ENCODE measurements at regions of chr6 and their contacts with region 1.

Region 1: GRCh38 chr6:147806702-147807101 is 298.2 kb downstream of the SAMD5 start:
- DNase-seq: peak in 3 of 4 experiments; percentile 20 to 75 (median 22)
- ATAC-seq: peak; percentile 95
- H3K4me3 ChIP-seq: no peak overlapping the region
- H3K27ac ChIP-seq: no peak overlapping the region
- H3K4me1 ChIP-seq: peaks cover 0 to 3% of the 10 kb centered on the region in 2 experiments; a peak in 2 of 5 replicates
- H3K27me3 ChIP-seq: no peaks in the 10 kb centered on the region
- CTCF ChIP-seq: peak; percentile 50 to 59 (median 55); a peak in 5 of 6 replicates
- EP300 ChIP-seq: no peak
- POLR2A ChIP-seq: no peak
- RAD21 ChIP-seq: peak; percentile 6 to 47; a peak in 2 of 4 replicates

Region 2: DNA sequence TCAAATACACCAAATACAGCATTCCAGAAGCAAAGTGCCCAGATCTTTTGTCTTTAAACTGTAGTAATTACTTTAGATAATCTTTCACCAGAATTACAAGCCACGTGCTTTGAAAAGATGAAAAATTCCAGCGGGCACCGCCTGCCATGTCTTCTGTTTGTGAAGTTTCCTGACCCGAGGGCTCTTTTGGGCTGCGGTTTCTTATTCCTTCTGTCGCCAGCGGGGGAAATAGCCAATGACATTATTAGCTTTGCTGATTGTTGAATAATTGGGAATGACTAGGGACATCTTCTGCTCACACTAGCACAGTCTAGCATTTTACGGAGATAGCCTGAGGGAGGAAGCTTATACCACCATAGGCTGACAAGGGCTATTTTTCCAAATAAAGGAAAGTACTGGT is 173.5 kb before region 1 on chr6:
- CTCF ChIA-PET with region 1: no interaction called
- POLR2A ChIA-PET with region 1: no interaction called
- in situ Hi-C with region 1: no loop called
- intact Hi-C with region 1: no loop called
- DNase-seq: no peak
- ATAC-seq: no peak
- H3K4me3 ChIP-seq: no peak overlapping the region
- H3K27ac ChIP-seq: no peak overlapping the region
- H3K4me1 ChIP-seq: no peaks in the 10 kb centered on the region
- H3K27me3 ChIP-seq: peaks cover 14 to 15% of the 10 kb centered on the region in 2 experiments; a peak in 3 of 5 replicates
- CTCF ChIP-seq: no peak
- EP300 ChIP-seq: no peak
- POLR2A ChIP-seq: no peak
- RAD21 ChIP-seq: no peak

Region 3: DNA sequence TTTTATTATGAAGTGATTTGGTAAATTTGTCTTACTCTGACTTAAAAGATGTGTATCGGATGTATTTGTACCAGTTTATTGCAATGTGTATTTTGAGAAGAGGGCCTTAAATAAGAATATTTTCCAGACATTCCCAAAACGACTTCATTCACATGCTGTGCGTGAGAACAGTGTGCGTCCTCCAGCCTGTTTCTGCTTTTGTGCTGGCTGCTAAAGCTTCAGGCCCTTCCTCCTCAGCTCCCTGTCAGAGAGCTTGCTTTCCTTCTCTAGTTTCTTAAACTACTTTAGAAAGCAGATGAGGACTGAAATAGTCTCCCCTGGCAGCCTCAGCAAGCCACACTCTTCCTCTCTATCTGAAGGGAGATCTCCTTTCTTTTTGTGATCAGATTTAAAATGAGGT is 140.4 kb before region 1 on chr6:
- CTCF ChIA-PET with region 1: no interaction called
- POLR2A ChIA-PET with region 1: interaction called, 3 read pairs
- in situ Hi-C with region 1: no loop called
- intact Hi-C with region 1: loop called (anchors 10 kb)
- DNase-seq: no peak
- ATAC-seq: no peak
- H3K4me3 ChIP-seq: no peak overlapping the region
- H3K27ac ChIP-seq: no peak overlapping the region
- H3K4me1 ChIP-seq: peaks cover 4 to 8% of the 10 kb centered on the region in 2 experiments; a peak in 4 of 5 replicates
- H3K27me3 ChIP-seq: no peaks in the 10 kb centered on the region
- CTCF ChIP-seq: no peak
- EP300 ChIP-seq: no peak
- POLR2A ChIP-seq: no peak
- RAD21 ChIP-seq: no peak

Region 4: DNA sequence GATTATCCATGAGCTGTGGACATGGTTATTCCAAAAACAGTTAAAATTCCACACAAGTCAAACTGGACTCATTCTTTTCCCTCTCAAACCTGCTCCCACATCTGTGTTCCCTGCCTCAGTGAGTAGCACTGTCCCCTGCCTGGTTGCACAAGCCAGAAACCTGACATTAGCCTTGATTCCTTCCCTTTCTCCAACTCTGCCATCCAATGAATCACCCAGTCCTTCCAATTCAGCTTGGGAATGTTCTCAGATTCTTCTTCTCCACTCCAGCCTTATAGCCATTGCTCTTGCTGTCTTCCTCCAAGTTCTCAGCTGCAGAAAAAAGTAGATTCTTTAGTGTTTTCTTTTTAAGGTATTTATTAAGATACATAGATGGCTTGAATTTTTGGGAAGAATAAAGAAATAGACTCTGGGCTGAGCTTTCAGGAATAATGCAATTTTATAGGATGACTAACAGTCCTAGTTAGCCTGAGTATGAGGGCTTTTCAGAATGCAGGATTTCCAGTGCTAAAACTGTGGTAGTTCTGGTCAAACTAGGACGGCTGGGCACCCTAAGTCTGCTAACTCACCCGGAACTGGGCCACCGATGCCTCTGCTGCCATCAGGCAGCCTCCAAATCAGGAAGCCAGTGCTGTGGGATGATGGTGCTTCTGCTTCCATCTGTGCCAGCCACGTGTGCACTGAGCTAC is 517.7 kb after region 1 on chr6:
- CTCF ChIA-PET with region 1: no interaction called
- POLR2A ChIA-PET with region 1: no interaction called
- in situ Hi-C with region 1: no loop called
- intact Hi-C with region 1: no loop called
- DNase-seq: no peak
- ATAC-seq: no peak
- H3K4me3 ChIP-seq: no peak overlapping the region
- H3K27ac ChIP-seq: no peak overlapping the region
- H3K4me1 ChIP-seq: no peaks in the 10 kb centered on the region
- H3K27me3 ChIP-seq: peaks cover 5 to 25% of the 10 kb centered on the region in 2 experiments; a peak in 4 of 5 replicates
- CTCF ChIP-seq: no peak
- EP300 ChIP-seq: no peak
- POLR2A ChIP-seq: no peak
- RAD21 ChIP-seq: no peak

Region 5: DNA sequence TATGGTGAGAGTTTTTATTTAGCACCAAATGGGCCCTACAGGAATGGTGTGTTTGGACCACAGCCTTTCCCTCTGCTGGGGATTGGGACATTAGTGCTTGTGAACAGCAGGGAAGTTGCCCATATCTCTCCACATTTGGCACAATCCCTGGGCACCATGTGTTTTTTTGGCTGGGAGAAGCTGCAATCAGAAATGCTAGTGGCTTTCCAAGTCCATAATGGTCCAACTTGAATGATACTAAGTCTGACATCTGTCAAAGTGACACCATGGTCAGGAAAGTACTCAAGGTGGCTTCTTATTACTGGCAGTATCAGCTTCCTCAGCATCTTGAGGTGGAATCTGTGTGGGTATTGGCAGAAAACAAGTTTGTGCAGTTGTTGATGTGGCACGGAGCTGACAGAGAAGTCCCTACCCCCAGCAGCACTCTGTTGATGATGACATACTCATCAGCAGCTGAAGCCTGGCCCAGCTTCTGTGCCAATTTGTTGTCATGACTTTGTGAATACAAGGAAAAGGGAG is 588.9 kb after region 1 on chr6:
- CTCF ChIA-PET with region 1: no interaction called
- POLR2A ChIA-PET with region 1: no interaction called
- in situ Hi-C with region 1: no loop called
- intact Hi-C with region 1: no loop called
- DNase-seq: no peak
- ATAC-seq: no peak
- H3K4me3 ChIP-seq: no peak overlapping the region
- H3K27ac ChIP-seq: no peak overlapping the region
- H3K4me1 ChIP-seq: no peaks in the 10 kb centered on the region
- H3K27me3 ChIP-seq: peaks cover 10 to 18% of the 10 kb centered on the region in 2 experiments; a peak in 4 of 5 replicates
- CTCF ChIP-seq: no peak
- EP300 ChIP-seq: no peak
- POLR2A ChIP-seq: no peak
- RAD21 ChIP-seq: no peak

Measured in K562 (cell line).